CD8-positive, alpha-beta T cell (primary cell): ENCODE measurements at regions of chr4 and their contacts with region 1.

Region 1: DNA sequence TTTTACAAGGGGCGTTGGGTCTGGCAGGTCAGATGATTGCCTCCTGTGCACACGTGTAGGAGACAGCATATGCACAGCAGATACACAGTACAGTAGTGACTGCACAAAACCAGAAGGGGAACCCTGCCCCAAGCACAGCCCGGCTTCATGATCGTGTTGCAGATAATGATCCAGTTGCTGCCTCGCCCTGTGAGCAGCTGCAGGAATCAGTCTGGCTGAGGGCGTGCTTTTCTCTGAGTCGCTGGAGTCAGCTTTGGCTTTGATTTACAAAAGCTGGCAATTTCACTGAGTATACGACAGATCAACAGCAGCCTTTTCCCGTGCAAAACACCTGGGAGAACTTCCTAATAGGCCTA is 303.1 kb upstream of the GATB start:
- DNase-seq: peak; percentile 17 to 75 (median 46)
- ATAC-seq: peak; percentile 98
- H3K4me3 ChIP-seq: no peak overlapping the region
- H3K4me3 Mint-ChIP-seq: no peak overlapping the region
- H3K27ac ChIP-seq: no peak overlapping the region
- H3K27ac Mint-ChIP-seq: no peak overlapping the region
- H3K4me1 ChIP-seq: peaks cover 4% of the 10 kb centered on the region
- H3K4me1 Mint-ChIP-seq: peaks cover 38% of the 10 kb centered on the region
- H3K27me3 ChIP-seq: no peaks in the 10 kb centered on the region
- H3K27me3 Mint-ChIP-seq: no peaks in the 10 kb centered on the region
- CTCF ChIP-seq: peak; percentile 23

Region 2: DNA sequence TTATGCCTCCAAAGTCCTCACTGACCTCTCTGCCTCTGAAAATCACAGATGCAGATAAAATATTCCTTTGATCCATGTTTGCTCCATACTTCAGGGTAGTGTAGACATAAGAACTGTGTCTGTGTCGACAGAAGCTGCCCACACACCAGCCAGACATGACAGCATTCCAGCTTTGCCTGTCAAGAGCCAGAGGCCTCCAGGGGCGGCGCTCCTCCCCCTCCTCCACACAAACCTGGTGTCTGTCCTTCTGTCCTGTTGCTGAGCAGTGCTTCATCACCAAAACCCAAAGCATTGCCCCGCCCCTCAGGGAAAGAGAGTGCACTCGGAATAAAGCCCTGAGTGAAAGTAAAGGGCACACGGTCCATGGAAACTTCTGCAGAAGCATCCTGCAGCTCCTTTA is 92.6 kb after region 1 on chr4:
- CTCF ChIA-PET with region 1: no interaction called
- POLR2A ChIA-PET with region 1: no interaction called
- intact Hi-C with region 1: loop called in 1 of 2 experiments (anchors 5 kb)
- DNase-seq: no peak
- ATAC-seq: no peak
- H3K4me3 ChIP-seq: no peak overlapping the region
- H3K4me3 Mint-ChIP-seq: no peak overlapping the region
- H3K27ac ChIP-seq: no peak overlapping the region
- H3K27ac Mint-ChIP-seq: no peak overlapping the region
- H3K4me1 ChIP-seq: peaks cover 9% of the 10 kb centered on the region
- H3K4me1 Mint-ChIP-seq: peaks cover 28% of the 10 kb centered on the region
- H3K27me3 ChIP-seq: no peaks in the 10 kb centered on the region
- H3K27me3 Mint-ChIP-seq: no peaks in the 10 kb centered on the region
- CTCF ChIP-seq: no peak

Region 3: DNA sequence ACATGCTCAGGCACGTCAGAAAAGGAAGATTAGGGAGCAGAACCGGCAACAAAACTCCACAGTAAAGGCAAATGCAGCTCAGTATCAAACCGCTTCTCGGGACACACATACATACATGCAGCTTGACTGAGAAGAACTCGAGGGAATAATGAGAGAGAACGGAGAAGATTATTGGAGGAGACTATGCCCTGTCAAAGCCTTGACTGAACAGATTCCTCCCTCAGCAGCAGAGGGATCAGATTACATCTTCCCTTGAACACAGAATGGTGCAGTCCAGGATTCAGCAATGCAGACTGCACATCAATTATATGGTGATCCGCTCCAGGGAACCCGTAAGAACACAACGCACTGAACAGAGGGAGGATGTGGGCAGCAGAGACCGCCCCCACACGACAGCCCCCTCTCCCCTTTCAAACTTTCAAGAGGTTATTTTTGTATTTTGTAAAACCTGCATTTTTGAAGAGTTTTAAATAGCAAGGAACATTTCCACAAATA is 288.8 kb after region 1 on chr4:
- CTCF ChIA-PET with region 1: interaction called, 17 read pairs
- POLR2A ChIA-PET with region 1: no interaction called
- intact Hi-C with region 1: loop called (anchors 10 kb)
- DNase-seq: peak in 6 of 9 experiments; percentile 1 to 62 (median 40)
- ATAC-seq: peak; percentile 89
- H3K4me3 ChIP-seq: peak overlapping the region in 1 of 2 experiments; percentile 19
- H3K4me3 Mint-ChIP-seq: peak overlapping the region; percentile 15
- H3K27ac ChIP-seq: no peak overlapping the region
- H3K27ac Mint-ChIP-seq: peak overlapping the region; percentile 11
- H3K4me1 ChIP-seq: peaks cover 14% of the 10 kb centered on the region
- H3K4me1 Mint-ChIP-seq: peaks cover 26% of the 10 kb centered on the region
- H3K27me3 ChIP-seq: no peaks in the 10 kb centered on the region
- H3K27me3 Mint-ChIP-seq: no peaks in the 10 kb centered on the region
- CTCF ChIP-seq: no peak

Region 4: DNA sequence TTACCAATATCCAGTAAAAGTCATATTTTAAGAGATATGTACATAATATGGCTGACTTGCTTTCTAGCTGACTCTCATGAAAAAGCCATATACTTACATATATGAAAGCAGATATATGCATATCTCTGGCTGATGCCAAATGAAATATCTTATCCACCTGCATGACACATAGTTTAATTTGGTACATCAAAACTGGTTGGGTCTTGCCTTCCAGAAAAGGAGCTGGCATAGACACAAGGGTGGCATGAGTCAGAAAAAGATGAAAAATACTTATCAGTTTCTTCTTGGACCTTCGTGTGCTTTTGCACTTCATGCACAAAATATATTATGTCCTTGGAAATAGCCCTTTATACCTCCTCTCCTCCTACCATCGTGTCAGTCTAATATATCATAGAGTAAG is 683.6 kb after region 1 on chr4:
- CTCF ChIA-PET with region 1: no interaction called
- POLR2A ChIA-PET with region 1: no interaction called
- intact Hi-C with region 1: no loop called
- DNase-seq: no peak
- ATAC-seq: no peak
- H3K4me3 ChIP-seq: no peak overlapping the region
- H3K4me3 Mint-ChIP-seq: no peak overlapping the region
- H3K27ac ChIP-seq: no peak overlapping the region
- H3K27ac Mint-ChIP-seq: no peak overlapping the region
- H3K4me1 ChIP-seq: no peaks in the 10 kb centered on the region
- H3K4me1 Mint-ChIP-seq: no peaks in the 10 kb centered on the region
- H3K27me3 ChIP-seq: no peaks in the 10 kb centered on the region
- H3K27me3 Mint-ChIP-seq: no peaks in the 10 kb centered on the region
- CTCF ChIP-seq: no peak